Activated CD4-positive, alpha-beta memory T cell treated with anti-CD3 and anti-CD28 coated beads for 36 hours (primary cell): ENCODE measurements at regions of chr18 and their contacts with region 1.

Region 1: DNA sequence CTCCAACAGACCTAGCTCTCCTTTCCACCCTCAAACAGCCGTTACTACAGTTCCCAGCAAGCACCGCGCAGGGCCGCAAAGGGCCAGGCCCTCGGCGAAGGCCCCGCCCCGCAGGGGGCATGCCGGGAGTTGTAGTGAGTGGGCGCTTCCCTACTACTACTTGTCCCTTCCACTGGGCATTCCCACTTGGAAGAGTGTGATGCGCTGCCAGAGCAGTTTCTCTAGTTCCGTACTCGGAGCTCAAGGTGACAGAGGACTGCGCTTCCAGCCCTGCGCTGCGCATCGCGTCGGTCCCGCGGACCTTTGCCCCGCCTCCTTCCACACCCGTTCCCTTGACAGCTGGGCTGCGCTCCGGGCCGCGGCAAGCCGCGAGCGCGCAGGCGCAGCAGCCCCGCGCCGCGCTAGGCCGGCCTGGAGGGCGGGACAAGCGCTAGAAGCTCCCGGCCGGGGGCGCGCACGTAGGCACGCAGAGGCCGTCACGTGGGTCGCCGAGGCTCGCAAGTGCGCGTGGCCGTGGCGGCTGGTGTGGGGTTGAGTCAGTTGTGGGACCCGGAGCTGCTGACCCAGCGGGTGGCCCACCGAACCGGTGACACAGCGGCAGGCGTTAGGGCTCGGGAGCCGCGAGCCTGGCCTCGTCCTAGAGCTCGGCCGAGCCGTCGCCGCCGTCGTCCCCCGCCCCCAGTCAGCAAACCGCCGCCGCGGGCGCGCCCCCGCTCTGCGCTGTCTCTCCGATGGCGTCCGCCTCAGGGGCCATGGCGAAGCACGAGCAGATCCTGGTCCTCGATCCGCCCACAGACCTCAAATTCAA is at the start of gene VAPA:
- DNase-seq: peak; percentile 95
- H3K4me3 Mint-ChIP-seq: peak within 1 kb of the TSS; percentile 84
- H3K27ac Mint-ChIP-seq: peak within 1 kb of the TSS; percentile 91
- H3K4me1 Mint-ChIP-seq: peaks cover 25% of the 10 kb centered on the region
- H3K27me3 Mint-ChIP-seq: peaks cover 3% of the 10 kb centered on the region
- total RNA-seq, gene VAPA: 152 to 159 TPM

Region 2: DNA sequence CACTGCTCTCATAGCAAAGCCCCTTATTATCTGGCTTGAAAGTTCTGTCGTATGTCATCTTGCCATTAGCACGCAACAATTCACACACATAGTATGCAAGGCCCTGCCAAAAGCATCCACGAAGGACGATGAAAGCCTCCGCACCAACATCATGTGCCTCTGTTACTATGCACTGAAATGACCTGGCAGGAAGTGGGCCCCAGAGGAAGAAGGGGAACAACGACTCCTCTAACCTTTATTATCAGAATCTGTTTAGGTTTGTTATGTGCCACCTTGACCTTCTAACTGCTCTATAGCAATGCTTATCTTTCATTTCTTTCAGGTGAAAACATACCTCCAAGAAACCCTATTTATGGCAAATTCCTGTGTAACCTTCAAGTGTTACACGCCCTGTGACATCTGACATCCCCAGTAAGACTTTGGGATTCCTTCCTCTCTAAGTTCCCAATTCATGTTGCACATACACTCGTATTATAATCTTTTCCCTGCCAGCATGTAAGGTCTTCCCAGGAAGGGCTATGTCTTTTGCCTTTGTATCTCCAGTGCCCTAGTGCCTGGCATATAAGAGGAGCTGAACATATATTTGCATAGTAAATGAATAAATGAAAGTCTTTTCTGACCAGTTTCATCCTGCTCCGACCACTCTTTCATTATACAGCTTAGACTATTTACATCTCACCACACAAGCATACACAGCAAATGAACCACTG is 818.3 kb before region 1 on chr18:
- CTCF ChIA-PET with region 1: no interaction called
- POLR2A ChIA-PET with region 1: no interaction called
- intact Hi-C with region 1: loop called (anchors 10 kb)
- DNase-seq: peak; percentile 87
- H3K4me3 Mint-ChIP-seq: peak overlapping the region; percentile 68
- H3K27ac Mint-ChIP-seq: peak overlapping the region; percentile 100
- H3K4me1 Mint-ChIP-seq: peaks cover 68% of the 10 kb centered on the region
- H3K27me3 Mint-ChIP-seq: no peaks in the 10 kb centered on the region

Region 3: DNA sequence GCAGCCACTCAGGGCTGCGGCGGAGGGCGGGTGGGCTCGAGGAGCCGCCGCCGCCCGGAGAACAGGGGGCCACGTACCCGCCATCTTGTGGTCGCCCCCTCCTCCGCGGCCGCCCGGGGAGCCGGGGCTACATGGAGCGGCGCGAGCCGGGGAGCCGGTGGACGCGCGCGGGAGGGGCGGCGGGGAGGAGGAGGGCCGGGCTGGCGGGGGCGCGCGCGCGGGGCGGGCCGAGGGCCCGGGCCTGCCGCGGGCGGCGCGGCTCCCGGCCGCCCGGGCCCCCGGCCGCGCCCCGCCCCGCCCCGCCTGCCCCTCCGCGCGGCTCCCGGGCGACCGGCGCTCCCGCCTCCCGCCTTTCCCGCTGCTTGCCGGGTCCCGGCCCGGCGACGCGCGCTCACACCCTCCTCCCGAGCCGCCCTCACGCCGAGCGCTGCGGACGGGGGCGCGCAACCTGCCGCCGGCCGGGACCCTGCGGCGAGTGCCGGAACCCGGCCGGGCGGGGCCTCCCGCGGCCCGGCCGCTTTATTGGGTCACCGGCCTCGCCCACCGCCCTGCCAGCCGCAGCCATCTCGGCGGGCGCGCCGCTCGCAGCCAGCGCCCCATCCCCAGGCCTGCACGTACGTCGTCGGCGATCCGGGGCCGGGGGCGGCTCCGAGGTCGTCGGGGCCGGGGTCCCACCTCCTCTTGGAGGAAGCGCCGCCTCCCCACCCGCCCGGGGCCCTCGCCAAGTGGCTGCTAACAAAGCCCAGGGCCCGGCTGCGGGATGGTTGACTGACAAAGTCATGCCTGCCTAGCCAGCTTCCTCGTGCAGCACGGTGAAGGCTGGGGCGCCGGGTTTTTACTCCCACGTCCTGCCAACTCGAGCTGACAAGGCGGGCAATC is 299.1 kb before region 1 on chr18 and contains the start of gene PPP4R1:
- CTCF ChIA-PET with region 1: interaction called, 3 read pairs
- POLR2A ChIA-PET with region 1: interaction called, 5 read pairs
- intact Hi-C with region 1: loop called (anchors 1 kb)
- DNase-seq: peak; percentile 78
- H3K4me3 Mint-ChIP-seq: peak within 1 kb of the TSS; percentile 95
- H3K27ac Mint-ChIP-seq: peak within 1 kb of the TSS; percentile 91
- H3K4me1 Mint-ChIP-seq: peaks cover 35% of the 10 kb centered on the region
- H3K27me3 Mint-ChIP-seq: no peaks in the 10 kb centered on the region
- total RNA-seq, gene PPP4R1: 39.3 to 44.5 TPM

Region 4: DNA sequence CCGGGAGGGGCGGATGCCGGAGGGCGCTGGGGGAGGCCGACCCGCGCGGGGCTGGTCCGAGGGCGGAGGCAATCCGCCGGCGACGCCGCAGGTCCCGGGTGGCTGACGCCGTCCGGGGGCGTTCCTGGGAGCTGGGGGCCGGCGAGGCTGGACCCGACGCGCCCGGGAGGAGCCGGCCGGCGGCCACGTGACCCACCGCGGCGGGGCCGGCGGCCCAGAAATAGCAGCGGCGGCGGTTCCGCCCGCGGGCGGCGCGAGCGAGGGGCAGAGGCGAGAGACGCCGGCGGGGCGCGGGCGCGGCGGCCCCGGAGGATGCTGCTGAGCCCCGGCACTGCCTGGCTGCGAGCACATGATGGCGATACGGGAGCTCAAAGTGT is 205.7 kb before region 1 on chr18 and contains the start of gene RAB31:
- CTCF ChIA-PET with region 1: no interaction called
- POLR2A ChIA-PET with region 1: no interaction called
- intact Hi-C with region 1: loop called (anchors 5 kb)
- DNase-seq: peak; percentile 24
- H3K4me3 Mint-ChIP-seq: peak within 1 kb of the TSS; percentile 73
- H3K27ac Mint-ChIP-seq: no peak within 1 kb of the TSS
- H3K4me1 Mint-ChIP-seq: peaks cover 31% of the 10 kb centered on the region
- H3K27me3 Mint-ChIP-seq: peaks cover 76% of the 10 kb centered on the region
- total RNA-seq, gene RAB31: 0.58 to 0.71 TPM

Region 5: DNA sequence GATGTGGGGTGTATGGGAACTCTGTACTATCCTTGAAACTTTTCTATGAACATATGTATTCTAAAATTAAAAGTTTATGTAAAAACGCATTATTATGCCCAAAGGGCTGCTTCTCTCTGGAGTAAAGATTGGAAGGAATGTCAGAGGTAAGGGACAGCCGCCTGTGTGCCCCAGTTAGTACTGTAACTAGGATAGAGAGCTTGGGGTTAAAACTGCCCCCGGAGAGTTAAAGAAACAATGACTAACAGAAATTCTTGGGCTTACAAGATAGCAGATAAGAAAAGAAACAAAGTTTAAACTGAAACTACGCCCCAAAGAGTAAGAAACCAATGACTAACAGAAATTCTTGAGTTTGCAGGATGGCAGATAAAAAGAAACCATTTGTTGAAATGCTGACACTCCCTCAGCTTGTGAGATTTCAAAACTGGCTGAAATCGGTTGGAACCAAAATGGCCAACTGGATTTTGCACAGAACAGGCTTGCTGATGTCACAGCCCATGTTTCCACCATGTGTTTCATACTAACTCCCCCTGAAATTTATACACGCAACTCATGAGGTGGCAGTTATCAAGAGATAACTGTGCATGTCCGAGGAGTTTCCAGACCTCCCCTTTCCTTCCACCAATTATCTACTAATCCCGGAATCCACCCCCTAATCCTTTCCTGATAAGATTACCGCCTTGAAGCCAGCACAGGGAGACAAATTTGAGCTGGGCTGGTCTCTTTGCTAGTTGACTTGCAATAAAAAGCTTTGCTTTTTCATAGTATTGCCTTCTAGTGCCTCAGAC is 36.7 kb before region 1 on chr18:
- CTCF ChIA-PET with region 1: no interaction called
- POLR2A ChIA-PET with region 1: interaction called, 6 read pairs
- intact Hi-C with region 1: loop called (anchors 1 kb)
- DNase-seq: peak; percentile 52
- H3K4me3 Mint-ChIP-seq: no peak overlapping the region
- H3K27ac Mint-ChIP-seq: peak overlapping the region; percentile 20
- H3K4me1 Mint-ChIP-seq: peaks cover 14% of the 10 kb centered on the region
- H3K27me3 Mint-ChIP-seq: peaks cover 16% of the 10 kb centered on the region

Region 6: DNA sequence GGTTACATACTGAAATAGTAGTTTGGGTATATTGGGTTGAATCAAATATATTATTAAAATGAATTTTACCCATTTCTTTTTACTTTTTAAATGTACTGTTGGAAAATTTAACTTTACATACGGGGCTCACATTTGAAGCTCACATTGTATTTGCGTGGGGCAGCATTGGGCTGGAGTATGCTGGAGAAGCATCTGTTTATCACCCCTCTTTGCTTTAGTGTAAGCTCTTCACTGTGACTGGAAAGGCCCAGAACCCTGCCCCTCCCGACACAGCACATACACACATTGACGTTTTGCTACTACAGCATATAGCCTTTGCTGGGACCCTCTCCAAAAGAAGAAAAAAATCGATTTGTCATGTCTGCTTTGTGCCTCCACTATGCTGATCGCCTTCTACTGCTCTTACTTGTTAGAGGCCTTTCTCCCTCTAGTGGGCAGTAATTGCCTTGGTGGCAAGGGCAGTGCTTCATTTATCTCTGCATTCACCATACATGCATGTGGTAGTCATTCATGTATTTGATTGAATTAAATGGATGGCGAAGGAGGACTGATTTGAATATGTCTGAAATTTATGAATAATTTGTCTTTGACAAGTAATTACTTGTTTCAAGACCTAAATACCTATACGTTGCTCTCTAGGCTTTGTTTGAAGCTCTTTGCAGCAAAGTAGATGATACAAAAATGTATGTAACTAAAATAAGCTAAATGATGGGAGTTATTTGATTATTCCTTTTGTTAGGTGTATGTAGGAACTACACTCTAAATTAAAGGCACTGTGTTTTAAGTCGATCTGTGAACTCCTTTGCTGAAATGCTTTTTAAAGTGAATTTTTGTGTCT is 37.5 kb after region 1 on chr18:
- CTCF ChIA-PET with region 1: interaction called, 3 read pairs
- POLR2A ChIA-PET with region 1: no interaction called
- intact Hi-C with region 1: loop called (anchors 5 kb)
- DNase-seq: peak; percentile 22
- H3K4me3 Mint-ChIP-seq: no peak overlapping the region
- H3K27ac Mint-ChIP-seq: no peak overlapping the region
- H3K4me1 Mint-ChIP-seq: peaks cover 3% of the 10 kb centered on the region
- H3K27me3 Mint-ChIP-seq: no peaks in the 10 kb centered on the region

Region 7: GRCh38 chr18:10131460-10132395 is 218.0 kb after region 1 on chr18:
- CTCF ChIA-PET with region 1: no interaction called
- POLR2A ChIA-PET with region 1: no interaction called
- intact Hi-C with region 1: no loop called
- DNase-seq: no peak
- H3K4me3 Mint-ChIP-seq: no peak overlapping the region
- H3K27ac Mint-ChIP-seq: no peak overlapping the region
- H3K4me1 Mint-ChIP-seq: no peaks in the 10 kb centered on the region
- H3K27me3 Mint-ChIP-seq: peaks cover 24% of the 10 kb centered on the region

Region 8: DNA sequence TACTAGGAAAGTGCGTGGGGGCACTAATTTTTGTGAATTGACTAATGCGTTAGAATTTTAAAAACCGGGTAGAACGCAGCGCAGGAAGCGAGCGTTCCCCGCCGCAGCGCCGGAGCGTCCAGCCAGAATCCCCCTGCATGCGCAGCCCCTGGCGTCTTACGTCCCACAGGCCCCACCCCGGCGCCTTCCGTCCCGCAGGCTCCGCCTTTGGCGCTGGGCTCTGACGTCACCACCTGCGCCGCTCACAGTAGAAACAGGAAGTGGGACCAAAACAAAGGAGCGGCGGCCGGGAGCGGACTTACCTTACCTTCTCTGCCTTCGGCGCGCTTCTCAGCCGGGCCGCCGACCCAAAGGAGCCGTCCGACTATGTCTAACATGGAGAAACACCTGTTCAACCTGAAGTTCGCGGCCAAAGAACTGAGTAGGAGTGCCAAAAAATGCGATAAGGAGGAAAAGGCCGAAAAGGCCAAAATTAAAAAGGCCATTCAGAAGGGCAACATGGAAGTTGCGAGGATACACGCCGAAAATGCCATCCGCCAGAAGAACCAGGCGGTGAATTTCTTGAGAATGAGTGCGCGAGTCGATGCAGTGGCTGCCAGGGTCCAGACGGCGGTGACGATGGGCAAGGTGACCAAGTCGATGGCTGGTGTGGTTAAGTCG is 1937.5 kb after region 1 on chr18 and contains the start of gene CHMP1B:
- CTCF ChIA-PET with region 1: no interaction called
- POLR2A ChIA-PET with region 1: no interaction called
- intact Hi-C with region 1: loop called (anchors 2 kb)
- DNase-seq: peak; percentile 98
- H3K4me3 Mint-ChIP-seq: peak within 1 kb of the TSS; percentile 100
- H3K27ac Mint-ChIP-seq: peak within 1 kb of the TSS; percentile 95
- H3K4me1 Mint-ChIP-seq: peaks cover 33% of the 10 kb centered on the region
- H3K27me3 Mint-ChIP-seq: no peaks in the 10 kb centered on the region
- total RNA-seq, gene CHMP1B: 21.2 to 22.0 TPM